CD4-positive, alpha-beta T cell (primary cell): ENCODE measurements at regions of chr3 and their contacts with region 1.

Region 1: DNA sequence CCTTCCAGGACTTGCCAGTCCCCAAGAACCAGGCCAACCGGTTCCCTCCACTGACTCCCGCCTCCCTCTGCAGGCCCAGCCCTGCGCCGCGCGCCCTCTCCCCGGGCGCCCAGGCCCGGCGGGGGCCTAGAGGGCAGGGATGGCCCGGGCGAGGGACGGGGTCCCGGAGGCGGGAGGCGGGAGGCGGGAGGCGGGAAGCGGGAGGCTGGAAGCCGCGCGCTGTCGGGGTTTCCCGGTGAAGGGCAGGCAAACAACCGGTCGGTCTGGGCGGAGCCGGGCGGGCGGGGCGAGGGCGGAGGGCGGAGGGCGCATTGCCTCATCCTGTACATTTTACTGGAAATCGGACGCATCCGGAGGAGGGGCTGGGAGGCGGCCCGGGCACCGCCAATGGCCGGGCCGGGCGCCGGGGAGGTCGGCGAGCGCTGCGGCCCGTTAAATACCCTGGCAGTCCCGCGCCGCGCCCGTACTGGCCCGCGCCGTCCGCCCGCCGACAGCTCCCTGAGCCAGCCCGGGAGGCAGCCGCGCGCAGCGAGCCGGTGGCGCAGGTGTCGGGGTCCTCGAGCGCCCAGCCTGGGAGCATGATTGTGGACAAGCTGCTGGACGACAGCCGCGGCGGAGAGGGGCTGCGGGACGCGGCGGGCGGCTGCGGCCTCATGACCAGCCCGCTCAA is at the start of gene NFKBIZ:
- DNase-seq: peak; percentile 84 to 97 (median 91)
- ATAC-seq: peak; percentile 66
- H3K4me3 ChIP-seq: peak within 1 kb of the TSS; percentile 79
- H3K4me3 Mint-ChIP-seq: peak within 1 kb of the TSS; percentile 99
- H3K27ac ChIP-seq: peak within 1 kb of the TSS; percentile 92 to 99
- H3K27ac Mint-ChIP-seq: peak within 1 kb of the TSS; percentile 100
- H3K4me1 ChIP-seq: peaks cover 24% of the 10 kb centered on the region
- H3K4me1 Mint-ChIP-seq: peaks cover 52% of the 10 kb centered on the region
- H3K27me3 ChIP-seq: no peaks in the 10 kb centered on the region
- H3K27me3 Mint-ChIP-seq: peaks cover 5% of the 10 kb centered on the region
- CTCF ChIP-seq: no peak
- total RNA-seq, gene NFKBIZ: 438 to 451 TPM

Region 2: DNA sequence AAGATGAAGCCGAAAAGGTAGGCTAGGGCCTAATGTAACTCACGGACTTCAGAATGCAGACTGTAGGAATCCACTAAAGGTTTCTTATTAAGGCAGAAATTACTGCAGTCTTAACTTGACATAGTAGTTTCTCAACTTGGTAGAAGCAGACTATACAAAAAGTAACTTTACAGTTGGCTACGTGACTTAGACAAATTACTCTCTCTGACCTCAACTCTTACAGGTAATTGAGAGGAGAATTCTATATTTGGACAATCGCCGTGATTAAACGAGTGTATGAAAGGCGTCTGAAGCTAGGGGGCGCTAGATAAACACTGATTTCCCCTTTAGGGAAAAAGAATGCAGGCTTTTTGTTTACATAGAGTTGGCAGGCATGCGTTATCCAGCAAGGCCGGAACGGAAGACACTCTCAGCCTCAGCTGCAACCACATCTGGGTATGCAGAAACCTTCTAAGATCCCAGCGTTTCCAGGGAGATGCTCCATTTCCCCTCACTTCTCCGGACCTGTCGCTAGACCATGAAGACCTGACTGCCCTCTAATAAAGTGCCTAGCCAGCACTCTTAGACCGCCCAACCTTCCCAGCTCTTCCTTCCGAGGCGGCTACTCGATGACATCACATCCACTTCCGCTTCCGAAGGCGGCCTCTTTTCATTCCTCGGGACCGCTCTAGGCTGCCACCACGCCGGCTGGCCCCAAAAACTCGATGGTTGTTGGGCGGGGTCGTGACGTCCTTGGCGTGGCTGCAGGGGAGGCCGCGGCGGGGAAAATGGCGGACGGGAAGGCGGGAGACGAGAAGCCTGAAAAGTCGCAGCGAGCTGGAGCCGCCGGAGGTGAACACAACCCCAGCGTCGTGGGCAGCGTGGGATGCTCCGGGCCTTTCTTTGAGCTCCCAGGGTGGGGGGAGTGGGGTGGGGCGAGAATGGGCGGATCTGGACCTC is 275.5 kb before region 1 on chr3 and contains the start of gene PCNP:
- CTCF ChIA-PET with region 1: no interaction called
- POLR2A ChIA-PET with region 1: interaction called, 12 read pairs
- intact Hi-C with region 1: no loop called
- DNase-seq: peak; percentile 97 to 99 (median 99)
- ATAC-seq: peak; percentile 73
- H3K4me3 ChIP-seq: peak within 1 kb of the TSS; percentile 96
- H3K4me3 Mint-ChIP-seq: peak within 1 kb of the TSS; percentile 99
- H3K27ac ChIP-seq: peak within 1 kb of the TSS; percentile 97 to 99
- H3K27ac Mint-ChIP-seq: peak within 1 kb of the TSS; percentile 96
- H3K4me1 ChIP-seq: peaks cover 40% of the 10 kb centered on the region
- H3K4me1 Mint-ChIP-seq: peaks cover 80% of the 10 kb centered on the region
- H3K27me3 ChIP-seq: no peaks in the 10 kb centered on the region
- H3K27me3 Mint-ChIP-seq: no peaks in the 10 kb centered on the region
- CTCF ChIP-seq: peak; percentile 85
- total RNA-seq, gene PCNP: 177 to 181 TPM

Region 3: DNA sequence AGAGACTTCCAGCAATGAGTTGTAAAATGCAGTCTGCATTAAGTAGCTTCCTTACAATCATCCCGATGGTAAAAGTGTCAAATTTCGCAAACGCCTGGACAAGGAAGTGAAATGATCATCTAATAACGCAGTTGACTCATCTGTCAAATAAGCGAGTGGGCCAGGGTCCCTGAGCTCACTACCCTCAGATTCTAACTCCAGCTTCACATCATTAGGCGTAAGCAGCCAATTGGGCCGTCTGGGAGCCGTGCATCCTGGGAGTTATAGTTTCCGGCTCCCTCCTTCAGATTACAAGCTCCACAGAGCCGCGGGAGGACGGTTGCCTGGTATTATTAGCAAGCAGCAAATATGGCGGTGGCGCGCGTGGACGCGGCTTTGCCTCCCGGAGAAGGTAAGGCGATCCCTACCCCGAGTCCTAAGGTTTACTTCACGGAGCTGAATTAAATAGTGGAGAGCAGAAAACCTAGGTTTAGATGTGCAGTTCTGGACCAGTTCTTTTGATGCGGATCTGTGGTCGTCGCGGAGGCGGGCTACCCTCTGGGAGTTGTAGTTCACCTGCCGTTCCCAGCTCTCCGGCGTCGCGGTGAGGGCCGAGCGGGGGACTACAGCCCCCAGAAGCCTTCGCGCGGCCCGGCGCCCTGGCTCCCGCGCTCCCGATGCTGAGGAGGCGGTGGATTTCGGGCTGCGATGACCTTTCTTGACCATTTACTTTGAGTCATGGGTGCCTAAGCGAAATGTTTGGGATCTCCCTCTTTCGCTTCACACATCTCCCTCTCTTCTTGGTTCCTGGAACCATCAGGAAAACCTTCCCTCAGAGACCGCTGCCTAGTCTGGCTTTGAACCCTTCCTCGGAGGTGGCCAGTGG is 124.6 kb before region 1 on chr3 and contains the start of gene CEP97:
- CTCF ChIA-PET with region 1: no interaction called
- POLR2A ChIA-PET with region 1: interaction called, 22 read pairs
- intact Hi-C with region 1: no loop called
- DNase-seq: peak; percentile 75 to 92 (median 80)
- ATAC-seq: peak; percentile 94
- H3K4me3 ChIP-seq: peak within 1 kb of the TSS; percentile 99
- H3K4me3 Mint-ChIP-seq: peak within 1 kb of the TSS; percentile 97
- H3K27ac ChIP-seq: peak within 1 kb of the TSS; percentile 75 to 81
- H3K27ac Mint-ChIP-seq: peak within 1 kb of the TSS; percentile 89
- H3K4me1 ChIP-seq: peaks cover 42% of the 10 kb centered on the region
- H3K4me1 Mint-ChIP-seq: peaks cover 46% of the 10 kb centered on the region
- H3K27me3 ChIP-seq: no peaks in the 10 kb centered on the region
- H3K27me3 Mint-ChIP-seq: no peaks in the 10 kb centered on the region
- CTCF ChIP-seq: no peak
- total RNA-seq, gene CEP97: 6.3 to 6.6 TPM

Region 4: GRCh38 chr3:101809178-101810021 is 39.8 kb before region 1 on chr3:
- CTCF ChIA-PET with region 1: interaction called, 6 read pairs
- POLR2A ChIA-PET with region 1: interaction called, 18 read pairs
- intact Hi-C with region 1: loop called (anchors 5 kb)
- DNase-seq: peak in 10 of 14 experiments; percentile 4 to 79 (median 27)
- ATAC-seq: peak; percentile 73
- H3K4me3 ChIP-seq: no peak overlapping the region
- H3K4me3 Mint-ChIP-seq: no peak overlapping the region
- H3K27ac ChIP-seq: peak overlapping the region; percentile 25 to 43
- H3K27ac Mint-ChIP-seq: peak overlapping the region; percentile 73
- H3K4me1 ChIP-seq: peaks cover 20% of the 10 kb centered on the region
- H3K4me1 Mint-ChIP-seq: peaks cover 50% of the 10 kb centered on the region
- H3K27me3 ChIP-seq: no peaks in the 10 kb centered on the region
- H3K27me3 Mint-ChIP-seq: no peaks in the 10 kb centered on the region
- CTCF ChIP-seq: peak; percentile 72

Region 5: GRCh38 chr3:101836652-101837598 is 12.3 kb before region 1 on chr3:
- CTCF ChIA-PET with region 1: interaction called, 4 read pairs
- POLR2A ChIA-PET with region 1: interaction called, 221 read pairs
- intact Hi-C with region 1: no loop called
- DNase-seq: peak in 1 of 14 experiments; percentile 53
- ATAC-seq: no peak
- H3K4me3 ChIP-seq: no peak overlapping the region
- H3K4me3 Mint-ChIP-seq: no peak overlapping the region
- H3K27ac ChIP-seq: no peak overlapping the region
- H3K27ac Mint-ChIP-seq: no peak overlapping the region
- H3K4me1 ChIP-seq: peaks cover 10% of the 10 kb centered on the region
- H3K4me1 Mint-ChIP-seq: peaks cover 34% of the 10 kb centered on the region
- H3K27me3 ChIP-seq: no peaks in the 10 kb centered on the region
- H3K27me3 Mint-ChIP-seq: no peaks in the 10 kb centered on the region
- CTCF ChIP-seq: no peak

Region 6: DNA sequence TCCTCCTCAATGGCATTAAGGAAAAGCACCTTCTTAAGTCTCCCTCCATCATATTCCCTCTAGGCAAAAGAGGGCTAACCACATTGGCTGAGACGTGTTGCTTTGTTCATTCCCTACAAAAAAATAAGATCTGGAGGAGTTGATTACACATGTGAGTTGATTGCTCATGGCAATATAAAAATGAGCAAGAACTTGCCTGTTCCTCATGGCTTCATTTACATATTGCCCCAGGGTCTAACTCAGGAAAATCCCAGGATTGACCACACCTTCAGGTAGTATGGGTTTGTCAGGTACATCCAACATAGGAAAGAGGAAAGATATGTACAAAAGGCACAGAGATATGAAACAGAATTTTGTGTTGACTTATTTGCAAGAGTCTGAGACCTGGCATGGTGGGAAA is 35.6 kb after region 1 on chr3:
- CTCF ChIA-PET with region 1: no interaction called
- POLR2A ChIA-PET with region 1: no interaction called
- intact Hi-C with region 1: no loop called
- DNase-seq: no peak
- ATAC-seq: no peak
- H3K4me3 ChIP-seq: no peak overlapping the region
- H3K4me3 Mint-ChIP-seq: no peak overlapping the region
- H3K27ac ChIP-seq: no peak overlapping the region
- H3K27ac Mint-ChIP-seq: no peak overlapping the region
- H3K4me1 ChIP-seq: no peaks in the 10 kb centered on the region
- H3K4me1 Mint-ChIP-seq: no peaks in the 10 kb centered on the region
- H3K27me3 ChIP-seq: no peaks in the 10 kb centered on the region
- H3K27me3 Mint-ChIP-seq: no peaks in the 10 kb centered on the region
- CTCF ChIP-seq: no peak

Region 7: GRCh38 chr3:102078854-102079253 is 229.7 kb after region 1 on chr3:
- CTCF ChIA-PET with region 1: no interaction called
- POLR2A ChIA-PET with region 1: interaction called, 32 read pairs
- intact Hi-C with region 1: no loop called
- DNase-seq: peak in 9 of 14 experiments; percentile 11 to 54 (median 36)
- ATAC-seq: peak; percentile 77
- H3K4me3 ChIP-seq: no peak overlapping the region
- H3K4me3 Mint-ChIP-seq: peak overlapping the region; percentile 70
- H3K27ac ChIP-seq: peak overlapping the region; percentile 59 to 66
- H3K27ac Mint-ChIP-seq: peak overlapping the region; percentile 96
- H3K4me1 ChIP-seq: peaks cover 22% of the 10 kb centered on the region
- H3K4me1 Mint-ChIP-seq: peaks cover 69% of the 10 kb centered on the region
- H3K27me3 ChIP-seq: no peaks in the 10 kb centered on the region
- H3K27me3 Mint-ChIP-seq: no peaks in the 10 kb centered on the region
- CTCF ChIP-seq: no peak

Region 8: GRCh38 chr3:102224128-102224527 is 374.9 kb after region 1 on chr3:
- CTCF ChIA-PET with region 1: interaction called, 3 read pairs
- POLR2A ChIA-PET with region 1: interaction called, 29 read pairs
- intact Hi-C with region 1: loop called in 1 of 2 experiments (anchors 5 kb)
- DNase-seq: peak in 4 of 14 experiments; percentile 3 to 38 (median 17)
- ATAC-seq: no peak
- H3K4me3 ChIP-seq: no peak overlapping the region
- H3K4me3 Mint-ChIP-seq: no peak overlapping the region
- H3K27ac ChIP-seq: no peak overlapping the region
- H3K27ac Mint-ChIP-seq: peak overlapping the region; percentile 16
- H3K4me1 ChIP-seq: peaks cover 23% of the 10 kb centered on the region
- H3K4me1 Mint-ChIP-seq: peaks cover 43% of the 10 kb centered on the region
- H3K27me3 ChIP-seq: no peaks in the 10 kb centered on the region
- H3K27me3 Mint-ChIP-seq: no peaks in the 10 kb centered on the region
- CTCF ChIP-seq: no peak